ENCODE measurements at regions of chr9 and their contacts with region 1.

Region 1: DNA sequence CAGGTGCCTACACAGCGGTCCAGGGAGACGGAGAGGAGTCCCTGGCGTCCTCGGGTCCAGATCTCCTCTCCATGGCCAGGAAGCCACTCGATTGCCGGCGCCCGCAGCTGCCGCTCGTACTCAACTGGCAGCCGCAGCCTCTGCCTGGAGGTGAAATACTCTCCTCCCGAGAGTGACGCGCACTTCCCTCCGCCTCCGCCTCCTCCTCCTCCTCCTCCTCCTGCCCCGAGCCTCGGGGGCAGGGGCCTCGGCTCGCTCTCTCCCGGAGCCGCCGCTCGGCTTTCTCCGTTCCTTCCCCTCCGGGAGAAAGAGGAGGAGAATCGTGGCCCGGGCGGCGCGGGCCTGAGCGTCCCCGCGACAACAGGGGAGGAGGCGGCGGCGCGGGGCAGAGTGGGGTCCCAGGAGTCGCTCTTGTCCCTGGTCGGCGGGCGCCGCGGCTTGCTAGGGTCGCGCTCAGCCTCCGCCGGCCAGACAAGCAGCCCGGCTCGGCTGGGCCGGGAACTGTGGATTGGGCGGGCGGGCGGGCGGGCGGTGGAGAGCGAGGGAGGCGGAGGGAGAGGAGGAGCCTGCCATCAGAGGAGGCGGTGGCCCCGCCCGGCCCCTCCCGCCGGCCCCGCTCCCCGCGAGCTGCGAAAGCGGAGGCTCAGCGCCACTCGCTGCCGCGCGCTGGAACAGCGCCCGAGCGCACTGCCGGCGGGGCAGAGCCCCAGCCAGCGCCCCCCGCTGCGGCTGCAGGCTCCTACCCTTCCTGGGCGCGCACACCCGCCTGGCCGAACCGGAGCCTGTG is at the start of gene CEMIP2:
- DNase-seq: peak; percentile 87 to 92 (median 90)
- H3K4me3 ChIP-seq: peak within 1 kb of the TSS; percentile 82 to 86
- H3K4me3 Mint-ChIP-seq: peak within 1 kb of the TSS; percentile 95 to 99 (median 97)
- H3K27ac ChIP-seq: peak within 1 kb of the TSS; percentile 87
- H3K27ac Mint-ChIP-seq: peak within 1 kb of the TSS; percentile 97 to 99 (median 98)
- H3K4me1 ChIP-seq: peaks cover 42% of the 10 kb centered on the region
- H3K4me1 Mint-ChIP-seq: peaks cover 32 to 56% (median 38%) of the 10 kb centered on the region in 4 donors
- H3K27me3 ChIP-seq: no peaks in the 10 kb centered on the region
- H3K27me3 Mint-ChIP-seq: no peaks in the 10 kb centered on the region
- total RNA-seq, gene CEMIP2: 85.8 to 89.4 TPM

Region 2: DNA sequence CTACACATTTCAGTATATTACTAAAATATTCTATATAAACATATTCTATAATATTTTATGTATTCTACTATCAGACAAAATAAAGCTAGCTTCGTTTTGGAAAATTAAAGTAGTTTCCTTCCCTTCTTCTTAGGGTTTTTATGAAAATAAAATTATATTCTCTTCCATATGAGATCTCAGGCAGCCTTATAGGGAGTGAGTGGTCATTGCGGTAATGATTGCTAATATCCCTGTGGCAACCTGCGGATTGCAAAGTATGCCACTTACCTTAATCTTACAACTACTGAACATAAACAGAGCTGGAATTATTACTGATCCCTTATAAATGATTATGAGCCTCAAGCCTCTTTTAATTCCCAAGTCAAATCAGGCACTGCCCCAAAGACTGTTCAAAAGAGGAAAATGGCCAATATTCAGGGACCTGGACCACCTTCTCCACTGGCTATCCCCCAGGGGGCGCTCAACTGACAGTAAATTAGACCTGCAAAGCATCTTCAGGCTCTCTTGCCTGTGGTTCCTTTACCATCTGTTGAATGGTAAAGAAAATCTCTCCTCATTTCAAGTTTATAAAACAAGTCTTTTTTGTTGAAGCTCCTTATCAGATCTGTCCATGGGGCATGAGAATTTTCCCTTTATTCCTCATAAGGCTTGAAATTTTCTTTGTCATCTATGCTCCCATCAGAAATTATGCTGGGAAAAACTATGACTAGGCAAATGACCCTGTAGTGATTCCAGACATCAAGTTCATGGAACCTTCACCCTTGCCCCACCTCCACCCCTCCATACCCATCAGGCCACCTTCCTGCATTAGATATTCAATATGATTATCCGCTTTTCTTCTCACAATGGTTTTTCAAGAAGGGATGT is 164.2 kb before region 1 on chr9:
- CTCF ChIA-PET with region 1: interaction called, 71 read pairs
- POLR2A ChIA-PET with region 1: interaction called, 3 read pairs
- intact Hi-C with region 1: loop called (anchors 1 kb)
- DNase-seq: peak; percentile 73 to 79 (median 75)
- H3K4me3 ChIP-seq: no peak overlapping the region
- H3K4me3 Mint-ChIP-seq: no peak overlapping the region
- H3K27ac ChIP-seq: no peak overlapping the region
- H3K27ac Mint-ChIP-seq: no peak overlapping the region
- H3K4me1 ChIP-seq: no peaks in the 10 kb centered on the region
- H3K4me1 Mint-ChIP-seq: no peaks in the 10 kb centered on the region
- H3K27me3 ChIP-seq: no peaks in the 10 kb centered on the region
- H3K27me3 Mint-ChIP-seq: no peaks in the 10 kb centered on the region

Region 3: DNA sequence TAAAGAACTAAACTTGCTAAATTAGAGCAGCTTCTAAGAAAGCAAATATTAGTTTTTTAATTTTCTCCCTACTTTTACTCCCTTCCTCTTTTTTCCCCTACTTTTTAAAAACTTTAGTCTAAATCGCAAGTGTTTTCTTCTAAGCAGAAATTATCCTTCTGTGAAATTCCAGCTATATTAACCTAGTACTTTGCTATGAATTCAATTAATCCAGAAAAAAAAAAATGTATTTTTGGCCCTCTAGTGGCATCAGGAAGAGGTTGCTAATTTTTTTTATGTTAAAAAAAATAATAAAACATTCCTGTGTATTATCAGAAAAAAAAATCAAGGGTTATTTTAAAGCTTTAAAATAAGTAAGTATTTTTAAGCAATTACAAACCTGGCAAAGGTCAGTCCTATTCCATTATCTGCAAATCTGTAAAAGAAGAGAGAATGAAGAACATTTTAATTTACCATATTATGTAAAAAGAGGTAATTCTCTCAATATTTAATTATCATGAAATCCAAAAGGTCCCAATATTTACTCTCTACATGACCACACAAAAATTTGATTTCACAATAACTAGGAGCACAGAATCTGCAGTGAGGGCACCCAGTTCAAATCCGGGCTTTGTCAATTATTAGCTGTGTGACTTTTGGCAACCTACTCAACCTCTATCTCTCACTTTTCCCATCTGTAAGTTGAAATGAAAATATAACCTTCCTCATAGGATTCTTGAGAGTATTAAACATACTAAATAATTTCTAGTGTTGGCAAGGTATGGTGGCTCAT is 52.3 kb before region 1 on chr9:
- CTCF ChIA-PET with region 1: interaction called, 23 read pairs
- POLR2A ChIA-PET with region 1: interaction called, 6 read pairs
- intact Hi-C with region 1: loop called (anchors 2 kb)
- DNase-seq: peak in 2 of 5 donors; percentile 17 to 24
- H3K4me3 ChIP-seq: no peak overlapping the region
- H3K4me3 Mint-ChIP-seq: no peak overlapping the region
- H3K27ac ChIP-seq: no peak overlapping the region
- H3K27ac Mint-ChIP-seq: peak overlapping the region in 4 of 7 donors; percentile 29 to 75 (median 74)
- H3K4me1 ChIP-seq: no peaks in the 10 kb centered on the region
- H3K4me1 Mint-ChIP-seq: peaks cover 0 to 15% (median 9%) of the 10 kb centered on the region in 4 donors
- H3K27me3 ChIP-seq: no peaks in the 10 kb centered on the region
- H3K27me3 Mint-ChIP-seq: no peaks in the 10 kb centered on the region

Region 4: DNA sequence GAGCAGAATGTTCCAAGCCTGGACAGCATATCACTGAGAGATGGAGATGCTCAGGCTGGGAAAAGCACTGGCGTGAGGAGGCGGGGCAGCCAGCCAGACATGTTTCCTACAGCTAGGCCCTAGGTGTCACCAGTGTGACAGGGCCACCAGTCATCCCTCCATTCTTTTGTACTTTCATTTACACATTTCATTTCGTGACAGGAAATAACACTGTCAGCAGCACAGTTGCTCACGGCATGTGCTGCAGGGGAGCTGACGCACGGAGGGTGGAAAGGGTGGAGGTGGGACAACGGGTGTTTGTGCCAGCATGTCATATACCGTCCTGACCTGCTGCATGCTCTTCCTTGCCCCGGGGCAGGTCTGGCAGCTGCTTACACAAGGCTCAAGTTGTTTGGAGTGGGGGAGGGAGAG is 14.5 kb after region 1 on chr9:
- CTCF ChIA-PET with region 1: interaction called, 106 read pairs
- POLR2A ChIA-PET with region 1: interaction called, 188 read pairs
- intact Hi-C with region 1: loop called (anchors 1 kb)
- DNase-seq: peak; percentile 86 to 95 (median 90)
- H3K4me3 ChIP-seq: no peak overlapping the region
- H3K4me3 Mint-ChIP-seq: peak overlapping the region; percentile 64 to 86 (median 82)
- H3K27ac ChIP-seq: peak overlapping the region; percentile 83
- H3K27ac Mint-ChIP-seq: peak overlapping the region; percentile 93 to 100 (median 99)
- H3K4me1 ChIP-seq: peaks cover 41% of the 10 kb centered on the region
- H3K4me1 Mint-ChIP-seq: peaks cover 36 to 51% (median 40%) of the 10 kb centered on the region in 4 donors
- H3K27me3 ChIP-seq: no peaks in the 10 kb centered on the region
- H3K27me3 Mint-ChIP-seq: no peaks in the 10 kb centered on the region

Region 5: GRCh38 chr9:71806901-71807307 is 38.3 kb after region 1 on chr9:
- CTCF ChIA-PET with region 1: interaction called, 70 read pairs
- POLR2A ChIA-PET with region 1: interaction called, 17 read pairs
- intact Hi-C with region 1: loop called (anchors 2 kb)
- DNase-seq: peak; percentile 60 to 64 (median 63)
- H3K4me3 ChIP-seq: no peak overlapping the region
- H3K4me3 Mint-ChIP-seq: peak overlapping the region in 2 of 8 donors; percentile 18 to 32
- H3K27ac ChIP-seq: no peak overlapping the region
- H3K27ac Mint-ChIP-seq: peak overlapping the region in 6 of 7 donors; percentile 2 to 93 (median 54)
- H3K4me1 ChIP-seq: peaks cover 7% of the 10 kb centered on the region
- H3K4me1 Mint-ChIP-seq: peaks cover 5 to 7% (median 6%) of the 10 kb centered on the region in 4 donors
- H3K27me3 ChIP-seq: no peaks in the 10 kb centered on the region
- H3K27me3 Mint-ChIP-seq: no peaks in the 10 kb centered on the region

Region 6: DNA sequence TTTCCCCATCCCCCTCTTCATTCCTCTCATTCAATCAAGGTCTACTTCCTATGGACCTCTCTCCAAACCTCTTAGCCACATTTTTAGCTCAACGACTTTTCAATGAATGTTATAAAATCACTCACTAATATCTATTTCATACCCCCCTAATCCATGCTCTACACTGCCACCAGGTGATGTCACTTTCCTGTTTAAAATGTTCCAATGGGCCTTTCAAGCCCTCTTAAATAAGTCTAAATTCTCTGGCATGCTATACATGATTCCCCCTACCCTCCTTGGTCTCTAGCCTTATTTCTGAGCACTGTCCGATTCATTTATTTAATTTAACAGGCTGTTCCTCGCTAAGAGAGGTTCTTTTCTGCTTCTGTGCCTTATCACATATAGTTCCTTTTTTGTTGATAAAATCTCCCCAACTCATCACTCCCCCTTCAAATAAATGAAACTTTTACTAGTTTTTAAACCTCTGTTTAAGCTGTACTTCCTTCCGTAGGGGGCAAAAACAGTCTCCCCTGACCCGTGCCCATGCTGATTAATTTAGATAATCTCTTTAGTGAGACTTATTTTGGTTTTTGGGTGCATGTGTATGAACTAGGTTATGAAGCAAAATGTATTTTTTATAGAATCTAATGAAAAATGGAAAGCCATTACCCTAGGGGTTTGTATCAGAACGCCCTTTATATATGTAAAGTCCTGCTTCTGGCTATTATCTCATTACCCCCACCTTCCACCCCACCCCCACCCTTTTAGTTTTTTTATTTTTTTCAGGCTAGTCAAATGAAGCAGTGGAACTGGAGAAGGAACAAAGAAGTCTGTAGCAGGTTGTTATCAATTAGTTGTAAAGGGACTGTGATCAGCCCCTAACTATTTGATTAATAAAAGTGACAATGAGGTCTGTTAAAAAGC is 133.4 kb after region 1 on chr9:
- CTCF ChIA-PET with region 1: no interaction called
- POLR2A ChIA-PET with region 1: no interaction called
- intact Hi-C with region 1: no loop called
- DNase-seq: no peak
- H3K4me3 ChIP-seq: no peak overlapping the region
- H3K4me3 Mint-ChIP-seq: peak overlapping the region in 3 of 8 donors; percentile 4 to 41 (median 25)
- H3K27ac ChIP-seq: no peak overlapping the region
- H3K27ac Mint-ChIP-seq: peak overlapping the region in 5 of 7 donors; percentile 25 to 78 (median 43)
- H3K4me1 ChIP-seq: peaks cover 52% of the 10 kb centered on the region
- H3K4me1 Mint-ChIP-seq: peaks cover 36 to 75% (median 50%) of the 10 kb centered on the region in 4 donors
- H3K27me3 ChIP-seq: no peaks in the 10 kb centered on the region
- H3K27me3 Mint-ChIP-seq: no peaks in the 10 kb centered on the region

Region 7: GRCh38 chr9:72364679-72365524 is 596.3 kb after region 1 on chr9 and contains the start of gene ZFAND5:
- CTCF ChIA-PET with region 1: no interaction called
- POLR2A ChIA-PET with region 1: interaction called, 4 read pairs
- intact Hi-C with region 1: loop called (anchors 5 kb)
- DNase-seq: peak; percentile 89 to 93 (median 91)
- H3K4me3 ChIP-seq: peak within 1 kb of the TSS; percentile 98
- H3K4me3 Mint-ChIP-seq: peak within 1 kb of the TSS; percentile 90 to 97 (median 96)
- H3K27ac ChIP-seq: peak within 1 kb of the TSS; percentile 97
- H3K27ac Mint-ChIP-seq: peak within 1 kb of the TSS; percentile 96 to 100 (median 99)
- H3K4me1 ChIP-seq: peaks cover 43% of the 10 kb centered on the region
- H3K4me1 Mint-ChIP-seq: peaks cover 27 to 50% (median 37%) of the 10 kb centered on the region in 4 donors
- H3K27me3 ChIP-seq: no peaks in the 10 kb centered on the region
- H3K27me3 Mint-ChIP-seq: no peaks in the 10 kb centered on the region
- total RNA-seq, gene ZFAND5: 143 to 148 TPM